ENCODE measurements at regions of chr15 and their contacts with region 1.

Region 1: DNA sequence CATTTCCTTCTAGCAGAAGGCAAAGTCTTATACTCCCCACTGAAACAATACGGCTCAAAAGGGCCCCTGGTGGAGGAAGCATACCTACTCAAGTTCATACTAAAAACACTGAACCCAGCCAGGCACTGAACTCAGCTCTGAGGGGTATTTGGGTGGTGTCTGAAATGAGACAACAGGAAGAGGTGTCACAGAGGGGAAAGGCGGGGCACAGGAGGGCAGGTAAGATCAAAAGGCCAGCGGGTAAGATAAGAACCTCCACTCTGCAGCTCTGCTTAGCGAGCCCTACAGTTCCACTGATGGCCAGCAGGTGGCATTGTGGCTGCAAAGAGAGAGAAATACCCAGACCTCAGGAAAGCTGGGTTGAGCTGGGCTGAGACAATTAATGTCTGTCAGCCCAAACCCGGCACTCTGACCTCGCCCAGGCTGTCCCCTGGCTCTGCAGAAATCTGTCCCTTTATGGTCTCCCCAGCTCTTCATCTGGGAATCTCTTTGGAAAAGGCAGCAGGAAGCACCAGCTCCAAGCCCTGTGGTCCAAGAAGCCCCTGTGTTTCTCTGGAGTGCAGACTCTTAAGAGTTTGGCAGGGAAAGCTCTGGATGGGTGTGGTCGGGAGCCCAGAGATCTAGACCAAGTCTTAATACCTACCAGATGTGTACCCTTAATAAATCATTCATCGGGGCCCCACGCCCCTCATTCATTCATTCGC is 8.4 kb downstream of the MFGE8 start:
- DNase-seq: peak; percentile 97
- ATAC-seq: peak; percentile 99
- H3K4me3 Mint-ChIP-seq: peak overlapping the region; percentile 2
- H3K27ac Mint-ChIP-seq: peak overlapping the region; percentile 84
- H3K4me1 Mint-ChIP-seq: peaks cover 29% of the 10 kb centered on the region
- H3K27me3 Mint-ChIP-seq: no peaks in the 10 kb centered on the region

Region 2: GRCh38 chr15:88620995-88621772 is 283.6 kb before region 1 on chr15 and contains the start of gene AEN:
- CTCF ChIA-PET with region 1: interaction called, 12 read pairs
- POLR2A ChIA-PET with region 1: interaction called, 4 read pairs
- DNase-seq: peak; percentile 96
- ATAC-seq: peak; percentile 91
- H3K4me3 Mint-ChIP-seq: peak within 1 kb of the TSS; percentile 94
- H3K27ac Mint-ChIP-seq: peak within 1 kb of the TSS; percentile 91
- H3K4me1 Mint-ChIP-seq: peaks cover 46% of the 10 kb centered on the region
- H3K27me3 Mint-ChIP-seq: peaks cover 4% of the 10 kb centered on the region
- total RNA-seq, gene AEN: 52.6 to 53.2 TPM

Region 3: DNA sequence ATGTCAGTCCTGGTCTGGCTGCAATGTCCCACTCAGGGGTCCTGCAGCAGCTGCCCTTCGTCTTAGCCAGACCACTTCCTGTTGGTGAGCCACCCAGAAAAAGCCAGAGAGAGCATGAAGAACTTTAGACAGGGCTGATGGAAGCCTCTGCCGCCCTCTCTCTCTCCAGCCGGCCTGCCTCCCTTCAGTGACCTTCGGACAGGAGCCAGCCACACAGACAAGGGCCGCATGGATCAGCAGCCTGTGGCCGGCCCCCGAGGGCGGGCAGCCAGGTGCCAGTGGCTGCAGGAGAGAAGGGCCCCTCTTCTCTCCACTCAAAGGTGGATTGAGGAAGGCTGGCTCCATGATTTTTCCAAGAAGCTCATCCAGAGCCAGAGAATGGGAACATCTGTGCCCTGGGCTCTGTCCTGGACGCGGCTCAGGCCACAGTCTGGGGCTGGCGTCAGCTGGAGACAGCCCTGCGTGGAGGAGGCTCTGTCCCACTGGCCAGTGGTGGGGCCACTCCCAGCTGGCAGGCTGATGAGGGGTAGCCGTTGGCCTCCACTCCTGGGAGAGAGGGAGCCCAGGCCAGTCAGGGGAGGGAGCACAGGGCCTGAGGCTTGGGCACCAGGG is 223.1 kb before region 1 on chr15:
- CTCF ChIA-PET with region 1: no interaction called
- POLR2A ChIA-PET with region 1: no interaction called
- DNase-seq: no peak
- ATAC-seq: no peak
- H3K4me3 Mint-ChIP-seq: no peak overlapping the region
- H3K27ac Mint-ChIP-seq: no peak overlapping the region
- H3K4me1 Mint-ChIP-seq: no peaks in the 10 kb centered on the region
- H3K27me3 Mint-ChIP-seq: peaks cover 7% of the 10 kb centered on the region

Region 4: DNA sequence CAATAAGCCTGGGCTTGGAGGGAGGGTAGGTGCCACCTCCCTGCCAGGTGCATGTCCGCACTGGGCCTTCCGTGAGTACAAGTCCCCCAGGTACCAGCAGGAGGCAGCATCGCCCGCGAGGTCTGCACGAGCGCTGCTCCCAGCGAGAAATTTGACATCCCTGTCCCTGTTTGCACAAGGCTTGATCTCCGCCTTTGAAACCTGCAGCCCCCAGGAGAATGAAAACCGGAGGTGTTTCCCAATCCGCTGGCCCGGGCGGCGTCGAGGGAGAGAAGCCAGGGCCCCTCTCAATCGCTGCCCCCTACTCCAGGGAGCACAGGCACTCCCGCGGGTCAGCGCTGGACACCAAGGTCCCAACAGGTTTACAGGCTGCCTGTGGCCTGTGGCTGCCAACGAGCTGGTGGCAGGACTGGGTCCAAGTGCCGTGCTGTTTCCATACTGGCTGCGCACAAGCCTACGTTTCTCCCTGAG is 10.4 kb before region 1 on chr15:
- CTCF ChIA-PET with region 1: interaction called, 34 read pairs
- POLR2A ChIA-PET with region 1: interaction called, 18 read pairs
- DNase-seq: peak; percentile 90
- ATAC-seq: peak; percentile 70
- H3K4me3 Mint-ChIP-seq: peak overlapping the region; percentile 84
- H3K27ac Mint-ChIP-seq: peak overlapping the region; percentile 77
- H3K4me1 Mint-ChIP-seq: peaks cover 36% of the 10 kb centered on the region
- H3K27me3 Mint-ChIP-seq: no peaks in the 10 kb centered on the region

Region 5: GRCh38 chr15:89003865-89004725 is 99.3 kb after region 1 on chr15:
- CTCF ChIA-PET with region 1: interaction called, 13 read pairs
- POLR2A ChIA-PET with region 1: no interaction called
- DNase-seq: no peak
- ATAC-seq: no peak
- H3K4me3 Mint-ChIP-seq: no peak overlapping the region
- H3K27ac Mint-ChIP-seq: no peak overlapping the region
- H3K4me1 Mint-ChIP-seq: peaks cover 7% of the 10 kb centered on the region
- H3K27me3 Mint-ChIP-seq: peaks cover 10% of the 10 kb centered on the region

Region 6: GRCh38 chr15:89057504-89058133 is 152.8 kb after region 1 on chr15:
- CTCF ChIA-PET with region 1: interaction called, 19 read pairs
- POLR2A ChIA-PET with region 1: no interaction called
- DNase-seq: peak; percentile 82
- ATAC-seq: peak; percentile 89
- H3K4me3 Mint-ChIP-seq: no peak overlapping the region
- H3K27ac Mint-ChIP-seq: no peak overlapping the region
- H3K4me1 Mint-ChIP-seq: peaks cover 4% of the 10 kb centered on the region
- H3K27me3 Mint-ChIP-seq: peaks cover 4% of the 10 kb centered on the region

Region 7: GRCh38 chr15:89171136-89172072 is 266.6 kb after region 1 on chr15:
- CTCF ChIA-PET with region 1: interaction called, 12 read pairs
- POLR2A ChIA-PET with region 1: no interaction called
- DNase-seq: peak; percentile 47
- ATAC-seq: no peak
- H3K4me3 Mint-ChIP-seq: no peak overlapping the region
- H3K27ac Mint-ChIP-seq: no peak overlapping the region
- H3K4me1 Mint-ChIP-seq: peaks cover 12% of the 10 kb centered on the region
- H3K27me3 Mint-ChIP-seq: no peaks in the 10 kb centered on the region

Measured in activated CD8-positive, alpha-beta T cell treated with anti-CD3 and anti-CD28 coated beads, Interleukin-2, amount 10 ng/mL, durations not matched to agents 7 days and 5 days (primary cell).